ENCODE measurements at regions of chr7 and their contacts with region 1.

Region 1: DNA sequence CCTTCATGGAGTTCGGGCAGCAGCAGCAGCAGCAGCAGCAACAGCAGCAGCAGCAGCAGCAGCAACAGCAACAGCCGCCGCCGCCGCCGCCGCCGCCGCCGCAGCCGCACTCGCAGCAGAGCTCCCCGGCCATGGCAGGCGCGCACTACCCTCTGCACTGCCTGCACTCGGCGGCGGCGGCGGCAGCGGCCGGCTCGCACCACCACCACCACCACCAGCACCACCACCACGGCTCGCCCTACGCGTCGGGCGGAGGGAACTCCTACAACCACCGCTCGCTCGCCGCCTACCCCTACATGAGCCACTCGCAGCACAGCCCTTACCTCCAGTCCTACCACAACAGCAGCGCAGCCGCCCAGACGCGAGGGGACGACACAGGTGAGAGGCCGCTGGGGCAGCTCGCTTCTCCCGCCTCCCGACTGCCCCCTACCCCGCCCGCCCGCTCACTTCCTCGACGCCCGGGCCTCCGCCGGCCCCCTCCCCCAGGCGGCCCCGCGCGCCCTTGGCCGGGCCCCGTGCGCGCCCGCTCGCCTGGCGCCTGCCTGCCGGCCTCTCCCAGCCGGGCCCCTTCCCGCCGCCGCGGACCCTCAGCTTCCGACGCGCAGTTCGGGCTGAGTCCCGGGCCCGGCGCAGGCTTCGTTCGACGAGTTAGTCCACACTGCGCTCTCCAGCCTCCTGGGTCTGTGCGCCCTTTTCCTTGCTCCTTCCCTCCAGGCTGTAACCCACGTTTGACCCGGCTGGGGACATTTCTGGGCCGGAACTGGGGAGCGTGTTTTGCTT is 873 bp downstream of the DLX6 start:
- DNase-seq: peak; percentile 73
- H3K4me3 Mint-ChIP-seq: peak overlapping the region; percentile 73
- H3K27ac Mint-ChIP-seq: peak overlapping the region; percentile 34
- H3K4me1 Mint-ChIP-seq: peaks cover 8% of the 10 kb centered on the region
- H3K27me3 Mint-ChIP-seq: peaks cover 80% of the 10 kb centered on the region

Region 2: GRCh38 chr7:96837593-96837992 is 168.6 kb before region 1 on chr7:
- intact Hi-C with region 1: no loop called
- DNase-seq: peak; percentile 83
- H3K4me3 Mint-ChIP-seq: peak overlapping the region; percentile 50
- H3K27ac Mint-ChIP-seq: no peak overlapping the region
- H3K4me1 Mint-ChIP-seq: peaks cover 17% of the 10 kb centered on the region
- H3K27me3 Mint-ChIP-seq: peaks cover 50% of the 10 kb centered on the region

Region 3: GRCh38 chr7:96973986-96974385 is 32.2 kb before region 1 on chr7:
- intact Hi-C with region 1: no loop called
- DNase-seq: no peak
- H3K4me3 Mint-ChIP-seq: no peak overlapping the region
- H3K27ac Mint-ChIP-seq: no peak overlapping the region
- H3K4me1 Mint-ChIP-seq: no peaks in the 10 kb centered on the region
- H3K27me3 Mint-ChIP-seq: peaks cover 8% of the 10 kb centered on the region

Region 4: DNA sequence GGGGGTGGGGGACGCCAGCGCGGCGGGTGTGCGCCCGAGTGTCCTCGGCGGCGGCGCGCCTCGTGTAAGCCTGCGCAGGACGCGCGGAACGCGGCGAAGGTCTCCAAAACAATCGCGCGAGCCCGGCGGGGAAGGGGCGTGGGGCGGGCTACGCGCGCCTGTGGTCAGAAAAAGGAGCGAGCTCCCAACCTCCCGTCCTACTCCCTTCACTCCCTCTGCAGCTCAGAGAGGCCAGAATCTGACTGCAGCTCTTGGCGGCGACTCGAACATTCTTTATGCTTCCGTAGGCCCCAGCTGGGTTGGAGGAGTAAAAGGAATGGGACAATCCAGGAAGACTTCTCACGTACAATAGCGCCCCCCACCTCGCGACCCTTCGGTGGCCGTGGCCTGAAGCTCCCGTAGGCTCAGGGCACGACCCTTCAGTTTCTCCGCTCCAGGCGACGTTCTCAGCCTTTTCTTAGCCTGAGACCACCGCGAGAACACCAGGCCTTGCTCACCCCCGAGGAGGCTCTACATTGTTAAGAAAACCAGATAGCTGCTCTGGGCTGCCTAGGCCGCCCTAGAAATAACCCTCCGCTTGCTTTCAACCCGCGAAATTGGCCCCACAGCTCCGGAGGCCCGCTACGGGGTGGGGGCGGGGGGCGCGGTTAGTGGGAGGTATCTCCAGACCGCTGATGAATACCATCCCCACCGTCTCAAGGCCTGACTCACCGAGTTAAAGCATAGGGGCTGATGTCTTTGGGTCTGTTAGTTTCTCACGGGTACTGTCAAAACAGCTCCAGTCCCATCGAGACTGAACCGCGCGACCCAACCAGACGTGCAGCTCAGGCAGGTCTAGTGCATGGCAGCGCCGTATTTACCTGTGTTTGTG is 15.3 kb after region 1 on chr7:
- intact Hi-C with region 1: loop called (anchors 1 kb)
- DNase-seq: no peak
- H3K4me3 Mint-ChIP-seq: no peak overlapping the region
- H3K27ac Mint-ChIP-seq: peak overlapping the region; percentile 42
- H3K4me1 Mint-ChIP-seq: peaks cover 12% of the 10 kb centered on the region
- H3K27me3 Mint-ChIP-seq: peaks cover 91% of the 10 kb centered on the region

Region 5: DNA sequence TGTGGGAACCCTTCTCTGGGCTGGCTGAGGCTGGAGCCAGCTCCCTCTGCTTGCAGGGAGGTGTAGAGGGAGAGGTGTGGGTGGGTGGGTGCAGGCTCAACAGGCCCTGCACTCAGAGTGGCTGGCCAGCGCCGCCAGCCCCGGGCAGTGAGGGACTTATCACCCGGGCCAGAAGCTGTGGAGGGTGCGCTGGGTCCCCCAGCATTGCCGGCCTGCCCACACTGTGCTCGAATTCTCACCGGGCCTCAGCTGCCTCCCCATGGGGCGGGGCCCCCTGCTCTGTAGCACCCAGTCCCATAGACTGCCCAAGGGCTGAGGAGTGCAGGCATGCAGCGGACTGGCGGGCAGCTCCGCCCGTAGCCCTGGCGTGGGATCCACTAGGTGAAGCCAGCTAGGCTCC is 535.0 kb after region 1 on chr7:
- intact Hi-C with region 1: no loop called
- DNase-seq: no peak
- H3K4me3 Mint-ChIP-seq: no peak overlapping the region
- H3K27ac Mint-ChIP-seq: no peak overlapping the region
- H3K4me1 Mint-ChIP-seq: no peaks in the 10 kb centered on the region
- H3K27me3 Mint-ChIP-seq: no peaks in the 10 kb centered on the region